AG04449 (cell line): ENCODE measurements at regions of chr1 and their contacts with region 1.

Region 1: DNA sequence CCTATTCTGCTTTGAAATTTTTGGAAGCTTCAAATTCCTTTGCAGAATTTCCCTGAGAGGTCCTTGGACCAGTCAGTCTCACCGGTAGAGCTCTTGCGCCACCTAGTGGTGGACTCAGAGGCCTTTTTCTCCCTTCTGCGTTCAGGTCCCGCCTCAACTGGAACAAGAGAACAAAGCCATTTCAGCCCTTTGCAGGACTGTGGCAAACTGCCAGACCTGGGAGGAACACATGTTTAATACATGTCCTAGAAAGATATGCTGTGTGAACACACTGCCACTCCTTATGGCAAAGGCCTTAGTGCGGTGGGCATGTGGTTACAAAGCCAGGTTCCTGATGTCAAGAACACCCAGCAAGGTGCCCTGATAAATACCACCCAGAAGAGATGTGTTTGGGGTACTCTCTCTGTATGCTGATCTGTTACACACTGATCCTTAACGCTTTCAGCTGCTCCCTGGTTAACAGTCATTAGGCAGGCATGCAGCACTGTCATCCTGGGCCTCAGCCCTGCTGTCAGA is 82.2 kb upstream of the SSX2IP start:
- DNase-seq: no peak
- H3K4me3 ChIP-seq: no peak overlapping the region
- CTCF ChIP-seq: peak; percentile 79

Region 2: DNA sequence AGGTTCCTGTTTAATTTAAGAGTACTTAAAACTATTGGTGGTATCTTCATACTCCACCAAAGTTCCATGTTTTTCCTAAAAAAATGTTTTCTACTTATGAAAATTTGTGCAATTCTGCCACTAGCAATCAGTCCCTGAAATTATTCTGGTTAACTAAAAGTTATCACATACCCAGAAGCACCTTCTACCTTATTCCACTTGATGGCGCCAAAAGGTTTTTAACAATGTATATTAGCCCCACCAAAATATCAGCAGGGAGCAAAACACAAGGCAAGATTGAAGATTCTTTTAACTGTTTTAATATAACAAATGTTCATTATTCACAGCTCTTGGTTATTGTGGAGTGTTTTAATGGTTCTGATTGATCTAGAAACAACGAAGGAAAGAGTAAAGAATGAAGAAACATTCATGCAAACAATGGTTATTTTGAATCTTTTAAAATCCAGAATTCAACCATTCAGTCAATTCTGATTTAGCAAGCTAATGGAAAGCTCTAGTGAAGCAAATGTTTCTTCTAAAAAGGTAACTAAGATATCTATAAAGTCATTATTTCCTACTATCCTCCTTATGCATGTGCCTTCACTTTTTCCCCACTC is 840.7 kb before region 1 on chr1:
- CTCF ChIA-PET with region 1: interaction called, 10 read pairs
- POLR2A ChIA-PET with region 1: no interaction called
- DNase-seq: no peak
- H3K4me3 ChIP-seq: no peak overlapping the region
- CTCF ChIP-seq: peak; percentile 44

Region 3: DNA sequence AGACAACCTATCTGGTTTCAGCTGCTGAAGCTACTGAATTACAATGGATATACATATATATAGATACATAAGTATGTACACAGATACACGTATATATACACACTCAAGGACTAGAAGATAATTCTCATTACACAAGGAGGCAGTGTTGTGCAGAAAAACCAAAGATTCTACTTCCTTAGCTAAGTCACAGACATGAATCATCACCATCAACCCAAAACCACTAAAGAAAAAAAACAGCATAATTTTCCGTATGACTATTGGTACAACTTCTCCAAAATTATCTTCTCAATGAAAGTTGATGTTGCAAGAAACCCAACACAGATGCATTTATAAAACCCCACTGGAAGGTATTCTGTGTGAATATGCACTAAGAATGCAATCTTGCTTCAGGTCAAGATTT is 330.2 kb before region 1 on chr1:
- CTCF ChIA-PET with region 1: interaction called, 39 read pairs
- POLR2A ChIA-PET with region 1: no interaction called
- DNase-seq: peak; percentile 82
- H3K4me3 ChIP-seq: no peak overlapping the region
- CTCF ChIP-seq: peak; percentile 54

Region 4: DNA sequence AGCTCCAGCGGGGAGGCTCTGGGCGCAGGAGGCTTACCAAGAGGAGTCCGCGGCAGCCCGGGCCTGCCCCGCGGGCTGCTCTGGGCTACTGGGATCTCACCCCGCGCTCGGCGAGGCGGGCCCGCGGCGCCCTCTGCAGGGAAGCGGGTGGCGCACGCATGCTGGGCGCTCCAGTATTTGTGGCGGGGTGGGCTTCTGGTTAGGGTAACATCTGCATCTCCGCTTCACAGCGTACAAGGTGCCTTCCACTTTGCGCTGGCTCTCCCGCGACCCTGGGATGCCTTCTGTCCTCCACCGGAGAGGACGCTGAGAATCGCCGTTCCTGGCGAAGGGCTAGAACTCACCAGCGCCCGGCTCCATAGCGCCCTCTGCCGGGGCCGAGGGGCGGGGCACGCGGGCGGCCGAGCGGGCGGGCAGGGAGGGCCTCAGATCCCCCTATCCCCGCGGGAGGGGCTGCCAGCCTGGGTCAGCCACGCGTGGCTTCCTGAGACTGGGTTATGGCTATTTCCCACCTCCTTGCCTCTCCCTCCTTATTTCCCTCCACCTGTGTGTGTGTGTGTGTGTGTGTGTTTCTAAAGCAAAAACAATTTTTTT is 151.7 kb before region 1 on chr1:
- CTCF ChIA-PET with region 1: interaction called, 11 read pairs
- POLR2A ChIA-PET with region 1: no interaction called
- DNase-seq: no peak
- H3K4me3 ChIP-seq: peak overlapping the region; percentile 69
- CTCF ChIP-seq: peak; percentile 79

Region 5: GRCh38 chr1:84936116-84936810 is 163.8 kb after region 1 on chr1:
- CTCF ChIA-PET with region 1: interaction called, 118 read pairs
- POLR2A ChIA-PET with region 1: no interaction called
- DNase-seq: no peak
- H3K4me3 ChIP-seq: no peak overlapping the region
- CTCF ChIP-seq: peak; percentile 85